GM13976 (cell line): ENCODE measurements at regions of chr12 and their contacts with region 1.

Region 1: DNA sequence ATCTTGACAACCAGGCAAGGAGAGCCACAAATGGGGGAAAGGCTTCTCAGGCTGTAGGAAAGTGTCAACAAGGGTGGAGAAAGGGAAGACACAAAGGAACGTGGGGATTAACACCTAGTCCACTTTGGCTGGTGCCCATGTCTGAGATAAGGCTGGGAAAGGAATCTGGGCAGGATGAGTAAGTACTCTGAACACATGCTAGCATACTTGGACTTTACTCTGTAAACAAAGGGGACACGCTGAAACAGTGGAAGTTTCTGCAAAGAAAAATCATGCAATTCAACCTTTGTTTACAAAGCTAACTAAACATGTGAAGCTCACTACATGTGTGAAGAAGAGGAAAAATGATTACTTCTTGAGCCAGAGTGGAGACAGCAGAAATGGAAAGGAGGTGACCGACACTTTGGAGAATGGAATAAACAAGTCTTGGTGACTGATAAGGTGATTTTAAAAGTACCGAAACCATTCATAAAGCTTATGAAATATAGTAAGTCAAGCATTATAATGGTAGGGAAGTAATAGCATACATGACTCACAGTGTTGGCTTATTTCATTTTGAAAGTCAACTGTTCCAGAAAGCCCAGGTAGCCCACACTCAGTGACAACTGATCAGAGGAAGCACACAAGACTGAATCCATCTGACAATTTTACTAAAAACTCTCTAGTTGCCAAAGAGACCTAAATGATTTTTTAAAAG is 13.2 kb downstream of the CPNE8 start:
- DNase-seq: no peak
- CTCF ChIP-seq: no peak

Region 2: GRCh38 chr12:38411426-38411825 is 480.8 kb before region 1 on chr12:
- in situ Hi-C with region 1: no loop called
- DNase-seq: no peak
- CTCF ChIP-seq: no peak

Region 3: DNA sequence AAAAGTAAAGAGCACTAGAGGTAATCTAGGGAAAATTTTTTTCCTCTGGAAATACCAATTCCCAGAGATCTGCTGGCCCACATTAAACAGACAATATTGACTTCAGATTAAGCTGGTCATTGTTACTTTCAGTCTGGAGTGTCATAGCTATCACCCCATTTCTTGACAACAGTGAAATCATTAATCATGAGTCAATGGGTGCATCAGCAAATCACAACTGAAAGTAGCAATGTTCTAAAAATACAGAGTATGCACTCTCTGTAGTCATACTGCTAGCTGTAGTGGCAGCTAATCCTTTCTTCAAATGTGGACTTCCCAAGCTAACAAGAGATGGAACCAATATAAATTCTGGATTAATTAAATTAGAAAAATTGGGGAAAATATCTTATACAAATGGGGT is 116.8 kb before region 1 on chr12:
- in situ Hi-C with region 1: loop called (anchors 25 kb)
- DNase-seq: peak; percentile 29
- CTCF ChIP-seq: no peak